GM10248 (cell line): ENCODE measurements at regions of chr11 and their contacts with region 1.

Region 1: DNA sequence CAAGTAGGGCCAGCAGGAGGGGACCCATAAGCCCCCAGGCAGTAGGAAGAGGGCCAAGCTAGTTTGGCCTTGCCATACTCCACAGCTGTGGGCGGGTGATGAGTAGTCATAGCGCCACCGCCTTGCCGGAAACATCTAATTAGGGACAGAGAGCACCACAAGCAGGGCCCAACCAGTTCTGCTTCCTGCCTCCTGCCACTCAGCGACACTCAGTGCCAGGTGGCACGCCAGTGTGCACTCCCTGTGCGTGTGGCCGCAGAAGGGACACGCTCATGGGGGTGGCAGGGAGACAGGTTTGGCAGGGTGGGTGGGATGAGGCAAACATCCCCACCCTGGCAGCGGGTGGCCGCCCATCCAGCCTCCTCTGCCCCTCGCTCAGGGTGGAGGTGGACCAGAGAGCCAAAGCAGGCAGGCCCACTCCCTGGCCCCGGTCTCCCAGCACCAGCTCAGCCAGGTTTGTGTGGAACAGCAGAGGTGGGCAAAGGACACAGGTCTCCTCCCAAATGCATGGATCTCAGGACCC is 4.9 kb downstream of the OVOL1 start:
- DNase-seq: peak; percentile 82
- CTCF ChIP-seq: no peak

Region 2: GRCh38 chr11:65652511-65653231 is 139.1 kb before region 1 on chr11:
- CTCF ChIA-PET with region 1: no interaction called
- POLR2A ChIA-PET with region 1: no interaction called
- DNase-seq: peak; percentile 99
- CTCF ChIP-seq: no peak

Region 3: DNA sequence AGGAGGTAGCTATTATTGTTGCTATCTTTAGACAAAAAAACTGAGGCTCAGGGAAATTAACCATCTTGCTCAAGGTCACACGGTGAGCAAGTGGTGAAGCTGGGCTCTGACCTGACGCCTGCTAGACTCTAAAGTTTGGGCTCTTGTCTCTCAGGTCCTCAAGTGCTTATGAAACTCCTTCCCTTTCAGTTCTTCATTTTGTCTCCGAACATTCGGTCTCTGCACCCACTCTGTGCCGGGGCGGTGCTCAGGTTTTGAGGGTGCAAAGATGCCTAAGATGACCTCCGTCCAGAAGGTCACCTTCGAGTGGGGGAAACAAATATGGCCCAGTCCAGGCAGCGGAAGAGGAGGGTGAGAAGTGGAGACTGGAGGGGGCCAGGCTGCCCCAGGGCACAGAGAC is 11.1 kb after region 1 on chr11:
- CTCF ChIA-PET with region 1: interaction called, 10 read pairs
- POLR2A ChIA-PET with region 1: no interaction called
- DNase-seq: peak; percentile 84
- CTCF ChIP-seq: no peak